Psoas muscle (tissue), 8 donors: ENCODE measurements at regions of chr17 and their contacts with region 1.

Region 1: GRCh38 chr17:32136856-32137255 is 5.4 kb upstream of the RHOT1 start:
- DNase-seq: no peak
- ATAC-seq: no peak
- H3K4me3 ChIP-seq: no peak overlapping the region
- H3K27ac ChIP-seq: no peak overlapping the region
- H3K4me1 ChIP-seq: peaks cover 5% of the 10 kb centered on the region
- H3K27me3 ChIP-seq: no peaks in the 10 kb centered on the region
- CTCF ChIP-seq: no peak

Region 2: GRCh38 chr17:32015245-32016013 is 121.4 kb before region 1 on chr17:
- intact Hi-C with region 1: loop called in 1 of 2 experiments (anchors 10 kb)
- DNase-seq: peak in 1 of 2 donors; percentile 63
- ATAC-seq: peak; percentile 49 to 82 (median 70)
- H3K4me3 ChIP-seq: peak overlapping the region; percentile 15
- H3K27ac ChIP-seq: peak overlapping the region; percentile 67
- H3K4me1 ChIP-seq: peaks cover 23% of the 10 kb centered on the region
- H3K27me3 ChIP-seq: no peaks in the 10 kb centered on the region
- CTCF ChIP-seq: no peak